ENCODE measurements at regions of chr11 and their contacts with region 1.

Region 1: DNA sequence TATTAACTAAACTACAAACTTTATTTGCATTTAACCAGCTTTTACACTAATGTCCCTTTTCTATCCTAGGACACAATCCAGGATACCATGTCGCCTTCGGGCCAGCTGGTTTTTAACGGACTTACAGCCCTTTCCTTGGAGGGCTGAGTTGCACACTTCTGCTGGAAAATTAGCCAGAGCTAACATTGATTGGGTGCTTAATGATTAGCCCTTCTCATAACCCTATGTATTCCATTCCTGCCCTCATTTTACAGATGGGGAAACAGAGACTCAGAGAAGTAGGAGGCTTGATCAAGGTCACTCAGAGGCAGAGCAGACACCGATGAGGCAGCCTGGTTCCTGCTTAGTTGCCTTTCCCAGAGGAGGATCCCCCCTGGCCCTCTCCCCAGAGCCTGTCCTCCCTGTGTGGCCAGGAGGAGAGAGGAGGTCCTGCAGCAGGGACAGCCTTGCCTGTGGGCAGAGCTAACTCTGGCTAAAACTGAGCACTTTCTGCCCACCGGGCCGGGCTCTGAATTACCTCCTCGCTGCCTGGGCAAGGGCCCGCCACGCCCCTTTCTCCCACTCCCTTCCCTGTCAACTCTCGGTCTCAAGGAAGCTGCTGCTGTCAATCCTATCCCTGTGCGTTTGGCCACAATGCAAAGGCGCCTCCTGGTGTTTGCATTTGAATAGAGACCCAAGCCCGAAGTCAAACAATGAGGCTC is 59.6 kb upstream of the PAX6 start:
- DNase-seq: no peak
- H3K4me3 ChIP-seq: no peak overlapping the region
- H3K27me3 ChIP-seq: 0 out of 2 replicates have a peak, but pooled peaks cover 2% of the 10 kb centered on the region
- CTCF ChIP-seq: peak; percentile 61

Region 2: DNA sequence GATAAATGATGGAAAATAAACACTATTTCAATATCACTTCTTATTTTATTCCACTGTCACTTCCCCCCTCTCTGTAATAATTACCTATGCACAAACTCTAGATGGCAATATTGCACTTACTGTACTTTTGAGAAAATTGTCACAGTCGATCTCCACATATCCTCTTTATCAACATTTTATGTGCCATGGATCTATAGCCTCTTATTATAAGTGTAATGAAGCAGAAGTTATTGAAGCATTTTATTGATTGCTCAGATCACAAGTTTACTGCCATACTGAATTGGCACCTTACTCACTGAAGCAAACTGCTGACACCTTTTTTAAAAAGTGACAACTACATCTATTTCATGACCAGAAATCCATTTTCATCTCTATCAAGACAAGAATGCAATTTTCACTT is 634.6 kb before region 1 on chr11:
- CTCF ChIA-PET with region 1: interaction called, 10 read pairs
- POLR2A ChIA-PET with region 1: no interaction called
- DNase-seq: no peak
- H3K4me3 ChIP-seq: no peak overlapping the region
- H3K27me3 ChIP-seq: no peaks in the 10 kb centered on the region
- CTCF ChIP-seq: no peak; the same call in 1 of the 2 replicates

Region 3: DNA sequence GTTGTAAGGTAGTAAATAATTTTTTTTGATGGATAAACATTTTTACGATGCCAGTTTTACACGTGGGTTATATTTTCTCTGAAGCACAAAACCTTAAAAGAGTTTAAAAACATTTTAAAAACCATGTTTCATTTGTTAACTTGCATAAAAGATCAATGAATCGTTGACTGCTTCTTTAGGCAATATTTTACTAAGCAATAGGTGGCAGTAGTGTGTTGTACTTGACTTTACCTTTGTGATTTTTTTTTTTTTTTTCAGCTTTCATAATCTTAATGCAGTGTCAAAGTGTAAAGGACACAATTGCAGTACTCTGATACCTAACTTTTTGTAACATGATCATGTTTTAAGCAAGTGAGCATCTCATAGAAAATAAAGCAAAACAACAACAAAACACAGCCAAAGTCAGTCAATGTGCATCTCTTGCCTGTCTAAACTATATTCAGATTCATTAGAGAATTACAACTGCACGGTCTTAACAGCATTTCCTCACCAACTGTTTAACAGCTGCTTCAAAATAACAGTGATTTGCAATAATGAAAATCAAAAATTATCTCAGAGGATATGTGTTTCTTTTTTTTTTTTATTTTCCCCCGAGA is 473.4 kb before region 1 on chr11:
- CTCF ChIA-PET with region 1: interaction called, 11 read pairs
- POLR2A ChIA-PET with region 1: no interaction called
- DNase-seq: no peak
- H3K4me3 ChIP-seq: no peak overlapping the region
- H3K27me3 ChIP-seq: no peaks in the 10 kb centered on the region
- CTCF ChIP-seq: peak; percentile 55

Region 4: GRCh38 chr11:31487848-31488247 is 382.9 kb before region 1 on chr11:
- CTCF ChIA-PET with region 1: interaction called, 13 read pairs
- POLR2A ChIA-PET with region 1: no interaction called
- DNase-seq: no peak
- H3K4me3 ChIP-seq: no peak overlapping the region
- H3K27me3 ChIP-seq: no peaks in the 10 kb centered on the region
- CTCF ChIP-seq: peak; percentile 46

Region 5: GRCh38 chr11:31747581-31747980 is 123.2 kb before region 1 on chr11:
- CTCF ChIA-PET with region 1: no interaction called
- POLR2A ChIA-PET with region 1: no interaction called
- DNase-seq: no peak
- H3K4me3 ChIP-seq: no peak overlapping the region
- H3K27me3 ChIP-seq: no peaks in the 10 kb centered on the region
- CTCF ChIP-seq: no peak